Transverse colon (tissue), 4 donors: ENCODE measurements at regions of chr3 and their contacts with region 1.

Region 1: DNA sequence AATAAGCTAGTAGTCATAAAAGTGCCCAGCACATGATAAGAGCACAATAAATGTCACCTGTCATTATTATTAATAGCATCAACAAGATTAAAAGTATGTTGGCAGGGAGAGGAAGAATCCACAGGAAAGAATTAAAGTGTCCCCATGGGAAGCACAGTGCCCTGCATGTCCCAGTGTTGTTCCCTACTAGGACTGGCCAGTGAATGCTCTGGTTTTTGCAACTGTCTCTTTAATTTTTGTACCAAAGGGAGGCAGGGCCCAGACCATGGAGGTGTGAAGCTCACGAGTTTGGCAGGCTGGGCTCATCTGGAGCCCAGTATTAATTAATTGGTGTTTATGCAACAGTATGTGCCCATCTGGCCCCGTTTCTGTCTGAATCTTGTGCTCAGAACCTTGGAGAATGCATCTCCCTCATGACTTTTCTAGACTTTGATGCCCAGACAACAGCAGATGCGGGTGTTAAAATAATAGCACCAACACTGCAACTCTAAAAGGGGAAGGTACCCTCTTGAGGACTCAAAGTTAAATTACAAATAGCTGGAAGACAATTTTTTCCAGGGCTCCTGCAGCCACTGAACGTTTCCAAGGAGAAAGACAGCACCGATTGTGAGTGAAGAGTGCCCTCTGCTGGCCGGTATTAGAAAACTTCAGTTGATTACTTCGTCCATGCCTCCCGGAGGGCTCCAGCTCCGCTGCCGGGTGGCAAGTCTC is 71.9 kb upstream of the SPATA12 start:
- DNase-seq: peak; percentile 85
- H3K4me3 ChIP-seq: no peak overlapping the region
- H3K27ac ChIP-seq: peak overlapping the region in 2 of 4 donors; percentile 27 to 51
- H3K4me1 ChIP-seq: peaks cover 0 to 36% (median 24%) of the 10 kb centered on the region in 4 donors
- H3K27me3 ChIP-seq: no peaks in the 10 kb centered on the region
- CTCF ChIP-seq: peak; percentile 83 to 90 (median 86)
- EP300 ChIP-seq: no peak
- POLR2A ChIP-seq: no peak

Region 2: GRCh38 chr3:56702490-56703315 is 285.9 kb before region 1 on chr3:
- in situ Hi-C with region 1: loop called (anchors 5 kb)
- intact Hi-C with region 1: loop called (anchors 2 kb)
- DNase-seq: peak; percentile 37
- H3K4me3 ChIP-seq: no peak overlapping the region
- H3K27ac ChIP-seq: no peak overlapping the region
- H3K4me1 ChIP-seq: peaks cover 0 to 4% (median 0%) of the 10 kb centered on the region in 4 donors
- H3K27me3 ChIP-seq: no peaks in the 10 kb centered on the region
- CTCF ChIP-seq: peak; percentile 80 to 90 (median 88)
- EP300 ChIP-seq: no peak
- POLR2A ChIP-seq: no peak

Region 3: DNA sequence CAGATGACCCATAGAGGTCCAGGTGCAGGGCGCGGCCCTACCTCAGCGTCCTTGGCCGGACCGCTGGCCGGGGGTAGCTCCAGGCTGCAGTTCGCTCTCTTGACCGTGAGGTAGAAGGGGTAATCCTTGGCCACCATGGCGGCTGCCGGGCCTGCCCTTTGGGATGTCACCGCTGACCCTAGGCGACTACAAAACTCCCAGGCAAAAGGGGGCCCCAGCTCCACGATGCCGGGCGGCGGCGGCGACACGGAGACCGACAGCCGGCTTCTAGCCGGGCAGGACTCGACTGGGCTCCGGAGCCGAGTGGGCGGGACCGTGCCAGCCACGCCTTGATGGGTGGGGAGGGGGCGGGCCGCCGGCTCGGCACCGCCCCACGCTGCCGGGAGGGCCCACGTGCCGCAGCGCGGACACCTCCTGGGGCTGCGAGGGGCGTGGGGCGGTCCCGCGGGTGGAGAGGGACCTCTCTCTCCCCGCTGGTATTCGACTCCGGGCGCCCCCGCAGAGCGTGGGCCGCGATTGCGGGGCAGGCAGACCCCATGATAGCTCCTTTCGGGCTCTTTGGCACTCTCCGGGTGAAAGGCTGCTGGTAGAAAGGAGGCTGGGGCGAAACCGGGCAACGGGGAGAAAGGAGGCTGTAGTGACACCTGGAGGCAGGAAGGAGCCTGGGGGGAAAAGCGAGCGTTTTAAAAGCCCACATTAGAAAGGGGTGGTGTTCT is 186.8 kb before region 1 on chr3 and contains the start of gene ARHGEF3:
- in situ Hi-C with region 1: loop called in 2 of 4 experiments (anchors 10 to 25 kb)
- intact Hi-C with region 1: loop called (anchors 10 kb)
- DNase-seq: peak; percentile 88
- H3K4me3 ChIP-seq: peak within 1 kb of the TSS; percentile 49 to 77 (median 57)
- H3K27ac ChIP-seq: peak within 1 kb of the TSS; percentile 65 to 82 (median 75)
- H3K4me1 ChIP-seq: peaks cover 13 to 37% (median 20%) of the 10 kb centered on the region in 4 donors
- H3K27me3 ChIP-seq: no peaks in the 10 kb centered on the region
- CTCF ChIP-seq: peak in 4 of 5 experiments; percentile 28 to 38 (median 36)
- EP300 ChIP-seq: no peak
- POLR2A ChIP-seq: peak; percentile 76
- total RNA-seq, gene ARHGEF3: 2.6 to 13.2 (median 5.6) TPM

Region 4: DNA sequence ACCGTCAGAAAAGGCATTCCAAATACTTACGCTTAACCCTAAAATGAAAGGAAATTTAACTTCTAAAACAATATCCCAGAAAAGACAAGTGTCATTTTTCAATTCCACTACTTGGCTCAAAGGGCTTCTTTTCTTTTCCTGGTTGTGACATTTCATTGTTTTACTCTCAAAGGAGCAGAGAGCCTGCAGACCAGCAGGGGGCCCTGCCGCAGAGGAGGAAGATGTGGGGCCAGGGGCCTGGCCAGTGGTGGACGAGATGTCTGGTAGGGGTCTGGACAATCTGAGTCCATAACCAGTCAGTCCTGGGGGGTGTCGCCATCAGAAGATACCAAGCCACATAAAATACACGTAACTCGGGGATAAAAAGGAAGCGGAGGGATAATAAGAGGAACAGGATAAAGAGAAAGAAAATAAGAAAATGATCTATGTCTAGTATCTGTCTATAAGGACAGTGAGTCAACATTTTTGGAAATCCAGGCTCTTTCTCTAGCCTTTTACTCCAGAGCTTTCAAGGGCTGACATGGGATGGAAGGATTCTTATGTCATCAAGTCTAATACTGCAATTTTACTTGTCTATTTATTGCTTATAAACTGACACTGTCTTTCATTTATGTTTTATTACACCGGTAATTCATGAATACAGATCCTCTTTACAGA is 132.6 kb before region 1 on chr3:
- in situ Hi-C with region 1: loop called in 1 of 4 experiments (anchors 25 kb)
- intact Hi-C with region 1: no loop called
- DNase-seq: peak; percentile 36
- H3K4me3 ChIP-seq: no peak overlapping the region
- H3K27ac ChIP-seq: no peak overlapping the region
- H3K4me1 ChIP-seq: peaks cover 0 to 9% (median 2%) of the 10 kb centered on the region in 4 donors
- H3K27me3 ChIP-seq: no peaks in the 10 kb centered on the region
- CTCF ChIP-seq: peak; percentile 45 to 57 (median 49)
- EP300 ChIP-seq: no peak
- POLR2A ChIP-seq: no peak